ENCODE measurements at regions of chr15 and their contacts with region 1.

Region 1: DNA sequence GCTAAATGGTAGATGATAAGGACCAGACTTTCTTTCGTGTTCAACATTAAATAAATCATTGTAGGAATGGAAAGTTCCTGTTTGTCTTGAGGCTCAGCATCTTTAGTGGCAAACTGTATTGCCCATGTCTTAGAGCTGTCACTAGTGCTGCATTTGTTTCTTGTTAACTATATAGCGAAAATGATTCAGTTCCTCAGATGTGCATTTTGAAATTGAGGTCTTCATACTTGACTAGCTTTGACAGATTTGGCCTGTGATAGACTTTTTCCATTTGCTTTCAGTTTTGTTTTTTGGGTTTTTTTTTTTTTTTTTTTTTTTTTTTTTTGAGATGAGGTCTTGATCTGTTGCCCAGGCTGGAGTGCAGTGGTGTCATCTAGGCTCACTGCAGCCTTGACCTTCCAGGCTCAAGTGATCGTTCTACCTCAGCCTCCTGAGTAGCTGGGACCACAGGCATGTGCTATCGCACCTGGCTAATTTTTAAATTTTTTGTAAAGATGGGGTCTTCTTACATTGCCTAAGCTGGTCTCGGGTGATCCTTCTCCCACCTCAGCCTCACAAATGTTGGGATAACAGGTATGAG is 9.5 kb upstream of the RPLP1 start:
- DNase-seq: no peak
- H3K4me3 ChIP-seq: no peak overlapping the region
- H3K27ac ChIP-seq: no peak overlapping the region
- H3K4me1 ChIP-seq: no peaks in the 10 kb centered on the region
- H3K27me3 ChIP-seq: no peaks in the 10 kb centered on the region
- CTCF ChIP-seq: no peak

Region 2: DNA sequence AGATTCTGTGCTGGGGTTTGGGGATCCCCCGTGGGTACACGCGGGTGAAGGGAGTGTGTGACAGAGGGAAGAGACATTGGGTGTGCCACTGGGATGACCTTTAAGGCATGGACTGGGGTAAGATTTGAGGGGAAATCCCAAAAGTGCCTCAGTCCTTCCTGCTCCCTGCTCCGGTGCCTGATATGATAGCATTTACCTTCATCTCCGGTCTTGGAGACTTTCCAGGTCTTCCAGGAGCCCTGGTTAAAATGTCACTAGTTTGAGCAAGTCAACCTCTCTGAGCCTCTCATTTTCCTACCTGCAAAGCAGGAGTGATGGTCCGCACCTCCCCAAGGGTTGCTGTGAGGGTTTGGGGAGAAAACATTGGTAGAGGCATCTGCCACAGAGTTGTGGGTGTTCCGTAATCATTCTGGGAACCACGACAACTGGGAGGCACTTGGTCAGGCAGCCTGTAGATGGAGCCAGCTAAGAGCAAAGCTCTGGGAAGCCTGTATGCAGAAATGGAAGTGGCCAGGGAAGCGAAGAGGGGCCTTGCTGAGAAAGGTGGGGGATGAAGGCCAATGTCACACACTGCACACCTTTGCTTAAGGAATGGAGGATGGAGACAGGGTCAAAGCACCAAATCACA is 62.9 kb before region 1 on chr15:
- CTCF ChIA-PET with region 1: interaction called, 10 read pairs
- POLR2A ChIA-PET with region 1: no interaction called
- intact Hi-C with region 1: no loop called
- DNase-seq: no peak
- H3K4me3 ChIP-seq: no peak overlapping the region
- H3K27ac ChIP-seq: no peak overlapping the region
- H3K4me1 ChIP-seq: no peaks in the 10 kb centered on the region
- H3K27me3 ChIP-seq: no peaks in the 10 kb centered on the region
- CTCF ChIP-seq: no peak